Posterior cingulate gyrus (tissue), 11 donors: ENCODE measurements at regions of chr16 and their contacts with region 1.

Region 1: GRCh38 chr16:66894948-66895688 is 14.8 kb downstream of the PDP2 start:
- DNase-seq: peak; percentile 51 to 95 (median 76)

Region 2: DNA sequence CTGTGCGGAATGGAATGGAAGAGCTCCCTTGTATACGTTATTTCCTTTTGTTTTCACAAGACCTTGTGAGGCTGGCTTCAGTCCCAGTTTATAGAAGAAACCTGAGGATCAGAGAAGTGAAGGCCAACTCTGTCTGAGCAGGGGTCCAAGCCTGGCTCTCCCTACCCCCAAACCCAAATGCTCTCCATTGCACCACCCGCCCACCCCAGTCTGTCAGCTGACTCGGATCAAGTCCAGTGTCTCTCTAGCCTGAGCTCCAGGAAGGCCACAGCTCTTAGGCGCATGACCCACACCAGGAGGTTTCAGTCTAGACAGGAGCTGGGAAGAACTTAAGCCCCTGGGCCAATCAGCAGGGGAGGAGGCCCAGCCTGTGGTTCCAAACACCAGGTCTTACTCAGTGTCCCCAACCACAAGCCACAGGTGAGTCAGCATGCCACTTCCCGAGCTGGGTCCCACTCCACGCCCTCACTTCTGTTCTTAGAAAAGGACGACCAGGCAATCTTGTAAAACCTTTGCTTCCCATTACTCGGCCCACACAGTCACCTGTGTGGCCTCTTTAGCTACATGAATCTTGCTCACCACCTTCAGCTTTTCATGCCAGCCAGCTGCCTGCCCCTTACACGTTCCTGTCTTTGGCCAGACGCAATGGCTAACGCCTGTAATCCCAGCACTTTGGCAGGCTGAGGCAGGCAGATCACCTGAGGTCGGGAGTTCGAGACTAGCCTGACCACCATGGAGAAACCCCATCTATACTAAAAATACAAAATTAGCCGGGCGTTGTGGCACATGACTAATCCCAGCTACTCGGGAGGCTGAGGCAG is 373.0 kb before region 1 on chr16:
- intact Hi-C with region 1: no loop called
- DNase-seq: peak in 2 of 10 donors; percentile 80 to 83

Region 3: DNA sequence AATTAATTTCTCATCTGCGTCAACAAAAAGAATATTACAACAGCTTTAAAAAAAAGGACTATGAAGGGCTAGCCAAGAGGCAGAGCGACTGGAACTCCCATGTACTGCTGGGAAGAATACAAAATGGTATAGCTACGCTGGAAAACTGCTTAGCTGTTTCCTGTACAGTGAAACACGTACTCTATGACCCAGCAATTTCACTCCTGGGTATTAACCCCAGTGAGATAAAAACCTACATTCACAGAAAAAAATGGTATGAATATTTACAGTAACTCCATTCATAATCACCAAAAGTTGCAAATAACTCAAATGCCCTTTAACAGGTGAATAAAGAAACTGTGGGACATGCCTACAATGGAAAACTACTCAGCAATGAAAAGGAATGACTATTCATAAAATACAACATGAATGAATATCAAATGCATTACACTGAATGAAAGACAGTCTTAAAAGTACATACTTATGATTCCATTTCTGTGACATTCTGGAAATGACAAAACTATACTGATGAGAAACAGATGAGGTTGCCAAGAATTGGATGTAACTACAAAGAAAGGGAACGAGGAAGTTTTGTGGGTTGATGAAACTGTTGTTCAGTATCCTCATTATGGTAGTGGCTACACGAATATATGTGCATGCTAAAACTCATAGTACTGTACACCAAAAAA is 226.2 kb before region 1 on chr16:
- intact Hi-C with region 1: no loop called
- DNase-seq: no peak

Region 4: DNA sequence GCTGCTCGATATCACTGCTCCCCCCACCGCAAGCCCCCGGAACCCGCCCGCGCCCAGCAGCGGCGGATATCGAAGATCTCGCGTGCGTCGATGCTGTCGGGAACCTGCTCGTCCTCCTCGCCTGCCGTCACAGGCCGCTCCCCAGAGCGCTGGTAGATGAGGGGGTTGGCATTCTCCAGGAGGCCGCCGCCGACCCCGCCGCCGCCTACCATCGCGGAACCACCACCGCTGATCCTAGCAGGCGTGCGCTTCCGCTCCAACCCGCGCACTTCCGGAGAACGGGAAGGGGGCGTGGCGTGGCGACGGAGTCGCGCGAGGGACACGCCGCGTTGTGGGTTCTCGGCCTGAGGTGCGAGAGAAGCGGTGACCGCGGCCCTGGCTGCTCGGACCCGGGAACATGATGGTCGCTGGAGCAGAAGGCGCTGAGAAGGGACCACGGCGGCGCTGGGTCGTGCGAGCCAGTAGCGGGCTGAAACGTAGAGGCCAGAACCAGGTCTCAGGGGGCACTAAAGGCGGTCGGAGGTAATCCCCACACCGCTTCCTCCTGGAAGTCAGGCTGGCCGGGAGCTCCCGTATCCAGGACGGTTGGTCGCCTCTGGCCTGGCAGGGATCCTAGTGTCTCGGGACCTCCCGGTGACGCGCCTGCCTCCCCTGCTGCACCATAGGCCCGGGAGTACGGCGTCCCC is 39.2 kb after region 1 on chr16 and contains the start of gene CIAO2B:
- intact Hi-C with region 1: loop called (anchors 5 kb)
- DNase-seq: peak; percentile 76 to 98 (median 88)

Region 5: DNA sequence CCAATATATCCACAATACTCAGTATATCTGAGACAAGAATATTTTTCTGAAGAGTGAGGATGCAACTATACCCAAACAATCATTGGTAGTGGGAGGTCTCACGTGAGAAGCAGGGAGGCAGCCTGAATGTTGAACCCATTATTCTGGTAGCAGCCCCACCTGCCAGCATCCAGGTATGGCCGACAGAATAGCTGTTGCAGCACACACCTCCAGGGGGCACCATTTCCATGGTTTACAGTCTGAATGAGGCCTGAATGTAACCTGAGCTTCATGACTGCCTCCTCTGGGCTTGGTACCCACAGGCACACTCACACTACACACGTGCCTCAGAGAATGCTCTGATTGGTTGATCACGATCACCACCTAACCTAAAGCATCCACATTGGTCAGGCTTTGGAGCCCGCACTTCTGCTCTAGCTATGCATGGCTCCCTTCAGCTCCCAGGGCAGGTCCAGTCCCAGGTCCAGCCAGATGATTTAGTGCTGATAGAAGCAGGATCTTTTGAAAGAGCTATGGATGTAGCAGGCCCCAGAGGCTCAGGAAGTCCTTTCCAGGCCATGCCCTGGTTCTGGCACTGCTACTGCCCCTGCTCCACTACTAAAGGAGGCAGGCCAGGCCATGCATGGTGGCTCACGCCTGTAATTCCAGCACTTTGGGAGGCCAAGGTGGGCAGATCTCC is 122.8 kb after region 1 on chr16:
- intact Hi-C with region 1: no loop called
- DNase-seq: peak in 9 of 10 donors; percentile 39 to 93 (median 64)